ENCODE measurements at regions of chr14 and their contacts with region 1.

Region 1: DNA sequence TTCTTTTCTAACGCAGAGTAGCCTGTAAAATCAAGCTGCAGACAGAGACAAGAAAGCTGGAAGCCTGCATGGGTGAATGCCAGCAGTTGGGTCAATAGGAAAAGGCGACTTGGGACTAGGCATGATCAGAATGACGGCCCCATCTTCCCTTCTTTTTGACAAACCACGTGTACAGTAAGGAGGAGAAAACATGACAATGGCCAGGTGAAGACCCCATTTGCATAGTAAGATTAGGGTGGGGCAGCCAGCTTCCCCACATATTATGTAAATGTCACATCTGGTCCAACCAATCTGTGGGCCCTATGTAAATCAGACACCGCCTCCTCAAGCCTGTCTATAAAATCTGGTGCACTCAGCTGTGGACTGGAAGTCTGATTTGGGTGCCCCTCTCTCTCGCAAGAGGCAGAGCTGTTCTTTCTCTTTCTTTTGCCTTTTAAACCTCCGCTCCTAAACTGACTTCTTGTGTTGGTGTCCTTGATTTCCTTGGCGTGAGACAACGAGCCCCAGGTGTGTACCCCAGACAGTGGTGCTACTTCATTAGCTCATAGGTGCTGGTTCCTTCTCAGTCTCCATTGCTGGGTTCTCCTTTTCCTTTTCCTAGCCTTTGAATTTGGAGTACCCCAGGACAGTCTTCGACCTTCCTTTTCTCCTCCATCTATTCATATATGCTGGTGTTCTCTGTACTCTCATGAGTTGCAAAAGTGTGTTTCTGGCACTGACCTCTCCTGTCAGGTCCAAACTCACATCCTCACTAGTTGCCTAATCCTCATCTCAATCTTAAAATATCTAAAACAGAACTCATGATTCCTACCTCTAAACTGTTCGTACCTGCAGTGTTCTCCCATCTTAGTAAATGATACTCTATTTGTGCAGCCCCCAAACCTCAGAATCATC is 9.4 kb upstream of the DHRS7 start:
- DNase-seq: no peak
- H3K4me3 ChIP-seq: no peak overlapping the region
- CTCF ChIP-seq: no peak
- POLR2A ChIP-seq: no peak

Region 2: GRCh38 chr14:60064491-60065072 is 110.0 kb before region 1 on chr14:
- intact Hi-C with region 1: loop called (anchors 5 kb)
- DNase-seq: no peak
- H3K4me3 ChIP-seq: no peak overlapping the region
- CTCF ChIP-seq: peak in 1 of 3 donors; percentile 26
- POLR2A ChIP-seq: no peak